ENCODE measurements at regions of chr12 and their contacts with region 1.

Region 1: GRCh38 chr12:54005853-54006686 is 2.7 kb upstream of the HOXC8 start:
- DNase-seq: peak; percentile 83
- ATAC-seq: peak; percentile 89
- H3K4me3 Mint-ChIP-seq: peak overlapping the region; percentile 78
- H3K27ac Mint-ChIP-seq: no peak overlapping the region
- H3K4me1 Mint-ChIP-seq: peaks cover 23% of the 10 kb centered on the region
- H3K27me3 Mint-ChIP-seq: peaks cover 77% of the 10 kb centered on the region
- CTCF ChIP-seq: peak; percentile 67

Region 2: GRCh38 chr12:53928054-53928835 is 77.8 kb before region 1 on chr12:
- CTCF ChIA-PET with region 1: no interaction called
- POLR2A ChIA-PET with region 1: no interaction called
- intact Hi-C with region 1: no loop called
- DNase-seq: no peak
- ATAC-seq: no peak
- H3K4me3 Mint-ChIP-seq: no peak overlapping the region
- H3K27ac Mint-ChIP-seq: no peak overlapping the region
- H3K4me1 Mint-ChIP-seq: peaks cover 7% of the 10 kb centered on the region
- H3K27me3 Mint-ChIP-seq: peaks cover 83% of the 10 kb centered on the region
- CTCF ChIP-seq: no peak

Region 3: DNA sequence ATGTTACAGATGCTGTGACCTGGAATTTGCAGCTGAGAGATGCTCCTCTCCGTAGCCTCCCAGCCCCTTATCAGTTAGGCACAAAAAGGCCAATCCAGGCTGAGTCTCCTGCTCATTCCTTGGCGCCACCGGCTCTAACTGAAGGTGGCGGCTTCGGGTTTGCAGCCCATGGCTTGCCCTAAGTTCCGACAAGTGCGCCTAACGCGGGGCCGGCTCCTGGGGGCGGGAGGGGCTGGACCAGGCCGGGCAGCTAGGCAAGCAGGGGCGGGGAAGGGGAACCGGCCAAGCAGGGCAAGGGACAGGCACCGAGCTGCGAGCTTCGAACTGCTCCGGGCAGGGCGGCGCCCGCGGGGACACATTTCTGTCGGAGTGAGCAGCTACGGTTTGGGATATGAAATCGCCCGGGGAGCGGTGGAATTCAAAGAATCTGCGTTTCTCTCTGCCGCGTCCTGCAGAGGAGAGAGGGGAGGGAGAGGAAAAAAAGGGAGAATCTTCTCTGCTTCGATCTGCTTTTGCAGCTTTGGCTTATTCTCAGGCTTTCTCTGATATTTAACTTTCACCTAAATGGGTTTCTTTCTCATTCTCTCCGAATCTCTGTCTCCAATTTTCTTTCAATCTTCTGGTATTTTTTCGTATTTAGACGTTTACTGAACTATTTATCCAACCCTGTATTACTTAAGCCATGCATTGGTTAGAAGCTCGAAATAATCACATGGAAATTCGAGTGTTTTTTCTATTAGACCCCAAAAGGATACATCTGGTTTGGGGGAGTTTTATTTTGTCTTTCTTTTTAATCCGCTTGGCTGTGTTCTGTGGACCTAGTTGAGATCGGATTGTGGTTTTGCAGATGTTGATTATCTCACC is 53.0 kb before region 1 on chr12:
- CTCF ChIA-PET with region 1: no interaction called
- POLR2A ChIA-PET with region 1: no interaction called
- intact Hi-C with region 1: no loop called
- DNase-seq: no peak
- ATAC-seq: no peak
- H3K4me3 Mint-ChIP-seq: no peak overlapping the region
- H3K27ac Mint-ChIP-seq: no peak overlapping the region
- H3K4me1 Mint-ChIP-seq: peaks cover 13% of the 10 kb centered on the region
- H3K27me3 Mint-ChIP-seq: peaks cover 71% of the 10 kb centered on the region
- CTCF ChIP-seq: no peak

Region 4: DNA sequence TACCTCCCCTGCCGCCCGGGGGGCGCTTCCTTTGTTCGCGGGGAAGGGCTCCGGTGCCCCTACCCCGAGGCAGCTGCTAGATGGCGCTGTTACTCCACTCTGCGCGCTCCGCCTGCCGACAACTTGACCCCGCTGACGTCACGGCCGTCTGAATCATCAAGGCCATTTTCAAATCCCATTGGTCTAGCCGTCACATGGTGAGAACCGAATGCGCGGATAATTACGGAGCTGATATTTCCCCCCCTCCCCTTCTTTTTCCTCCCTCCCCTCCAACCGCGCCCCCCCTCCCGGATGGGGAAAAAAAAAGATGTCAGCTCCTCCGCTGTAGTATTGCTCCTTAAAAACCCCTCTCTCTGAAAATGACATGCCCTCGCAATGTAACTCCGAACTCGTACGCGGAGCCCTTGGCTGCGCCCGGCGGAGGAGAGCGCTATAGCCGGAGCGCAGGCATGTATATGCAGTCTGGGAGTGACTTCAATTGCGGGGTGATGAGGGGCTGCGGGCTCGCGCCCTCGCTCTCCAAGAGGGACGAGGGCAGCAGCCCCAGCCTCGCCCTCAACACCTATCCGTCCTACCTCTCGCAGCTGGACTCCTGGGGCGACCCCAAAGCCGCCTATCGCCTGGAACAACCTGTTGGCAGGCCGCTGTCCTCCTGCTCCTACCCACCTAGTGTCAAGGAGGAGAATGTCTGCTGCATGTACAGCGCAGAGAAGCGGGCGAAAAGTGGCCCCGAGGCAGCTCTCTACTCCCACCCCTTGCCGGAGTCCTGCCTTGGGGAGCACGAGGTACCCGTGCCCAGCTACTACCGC is 21.0 kb before region 1 on chr12 and contains the start of gene HOXC10:
- CTCF ChIA-PET with region 1: interaction called, 13 read pairs
- POLR2A ChIA-PET with region 1: no interaction called
- intact Hi-C with region 1: no loop called
- DNase-seq: no peak
- ATAC-seq: peak; percentile 37
- H3K4me3 Mint-ChIP-seq: peak within 1 kb of the TSS; percentile 15
- H3K27ac Mint-ChIP-seq: peak within 1 kb of the TSS; percentile 56
- H3K4me1 Mint-ChIP-seq: peaks cover 28% of the 10 kb centered on the region
- H3K27me3 Mint-ChIP-seq: peaks cover 88% of the 10 kb centered on the region
- CTCF ChIP-seq: no peak
- total RNA-seq, gene HOXC10: not detected in 2 replicates

Region 5: DNA sequence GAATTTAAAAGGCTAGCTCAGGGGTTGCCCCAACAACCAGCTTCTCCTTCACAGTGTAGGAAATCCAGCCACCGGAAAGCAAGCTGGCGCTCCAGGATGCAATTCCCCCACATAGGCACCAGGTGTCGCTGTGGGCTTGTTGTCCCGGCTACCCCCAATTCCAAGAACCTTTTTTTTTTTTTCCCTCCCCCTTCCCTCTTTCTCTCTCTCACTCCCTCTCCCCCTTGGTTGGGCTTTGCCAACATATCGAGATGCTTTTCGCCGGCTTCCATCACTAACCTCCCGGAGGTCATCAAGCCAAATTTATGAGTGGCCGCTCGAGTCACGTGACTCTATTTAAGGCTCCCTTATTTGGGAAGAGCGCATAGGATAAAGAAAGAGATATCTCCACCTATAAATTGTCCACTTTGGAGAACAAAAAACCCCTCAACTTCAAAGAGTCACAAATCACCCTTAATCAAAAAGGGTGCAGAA is 26.6 kb after region 1 on chr12 and contains the start of gene HOXC5:
- CTCF ChIA-PET with region 1: interaction called, 9 read pairs
- POLR2A ChIA-PET with region 1: no interaction called
- intact Hi-C with region 1: loop called (anchors 2 kb)
- DNase-seq: peak; percentile 51
- ATAC-seq: peak; percentile 63
- H3K4me3 Mint-ChIP-seq: peak within 1 kb of the TSS; percentile 70
- H3K27ac Mint-ChIP-seq: peak within 1 kb of the TSS; percentile 24
- H3K4me1 Mint-ChIP-seq: peaks cover 30% of the 10 kb centered on the region
- H3K27me3 Mint-ChIP-seq: peaks cover 57% of the 10 kb centered on the region
- CTCF ChIP-seq: peak; percentile 66
- total RNA-seq, gene HOXC5: not detected in 2 replicates

Region 6: DNA sequence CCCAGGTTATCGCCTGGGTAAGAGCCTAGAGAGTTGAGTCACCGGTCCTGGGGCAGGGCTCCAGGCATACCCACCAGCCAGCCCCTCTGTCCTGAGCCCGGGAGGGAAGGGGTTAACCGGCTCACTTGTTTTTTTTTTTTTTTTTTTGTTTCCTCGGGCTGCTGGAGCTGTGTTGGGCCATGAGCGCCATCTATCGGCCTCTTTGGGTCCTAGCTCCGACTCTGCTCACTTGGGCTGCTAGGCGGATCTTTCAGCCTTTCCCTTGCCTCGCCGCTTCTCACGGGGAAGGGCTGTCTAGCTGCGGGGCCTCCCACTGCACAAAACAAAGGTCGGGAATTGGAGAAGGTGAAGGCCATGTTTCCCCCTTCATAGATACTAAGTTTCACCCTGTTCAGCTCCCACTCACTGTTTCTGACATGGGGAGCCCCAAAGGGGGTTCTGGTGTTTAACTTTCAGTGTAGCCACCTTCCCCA is 185.5 kb after region 1 on chr12:
- CTCF ChIA-PET with region 1: interaction called, 78 read pairs
- POLR2A ChIA-PET with region 1: interaction called, 3 read pairs
- intact Hi-C with region 1: loop called (anchors 1 kb)
- DNase-seq: peak; percentile 58
- ATAC-seq: peak; percentile 61
- H3K4me3 Mint-ChIP-seq: no peak overlapping the region
- H3K27ac Mint-ChIP-seq: no peak overlapping the region
- H3K4me1 Mint-ChIP-seq: peaks cover 29% of the 10 kb centered on the region
- H3K27me3 Mint-ChIP-seq: peaks cover 20% of the 10 kb centered on the region
- CTCF ChIP-seq: no peak

Region 7: DNA sequence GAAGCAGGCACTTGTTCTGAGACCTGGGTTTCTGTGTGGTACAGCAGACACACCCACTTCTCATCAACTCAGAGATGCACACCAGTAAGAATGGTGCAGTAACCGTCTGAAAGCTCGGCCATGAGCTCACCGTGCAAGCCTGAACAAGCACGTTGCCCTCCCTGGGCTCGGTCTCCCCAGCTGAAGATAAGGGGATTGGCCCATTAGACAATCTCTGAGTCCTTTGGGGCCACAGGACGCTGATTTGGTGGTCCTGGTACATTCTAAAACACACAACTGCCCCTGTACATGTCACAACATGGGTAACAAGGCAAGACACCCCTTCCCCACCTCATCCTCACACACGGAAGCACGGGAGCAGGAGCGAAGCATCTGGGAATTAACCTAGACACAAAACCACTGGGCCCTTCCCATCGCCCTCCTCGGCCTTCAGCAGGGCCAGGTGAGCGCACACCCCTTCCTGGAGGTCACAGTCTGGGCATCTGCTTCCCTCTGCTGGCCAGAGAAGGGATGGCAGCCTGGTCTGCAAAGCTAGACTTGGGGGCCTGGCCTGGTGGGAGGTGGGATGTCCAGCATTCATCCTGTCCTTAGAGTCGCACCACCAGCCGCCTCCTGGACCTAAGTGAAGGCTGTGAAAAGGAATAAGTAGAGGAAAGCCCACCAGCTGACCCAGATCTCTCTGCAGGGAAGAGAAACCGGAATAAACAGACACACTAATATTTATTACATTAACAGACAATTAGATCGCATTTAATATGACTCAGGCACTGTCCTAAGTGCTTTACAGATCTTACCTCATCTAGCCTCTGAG is 201.6 kb after region 1 on chr12:
- CTCF ChIA-PET with region 1: interaction called, 66 read pairs
- POLR2A ChIA-PET with region 1: interaction called, 7 read pairs
- intact Hi-C with region 1: loop called (anchors 1 kb)
- DNase-seq: peak; percentile 79
- ATAC-seq: peak; percentile 100
- H3K4me3 Mint-ChIP-seq: no peak overlapping the region
- H3K27ac Mint-ChIP-seq: peak overlapping the region; percentile 30
- H3K4me1 Mint-ChIP-seq: peaks cover 4% of the 10 kb centered on the region
- H3K27me3 Mint-ChIP-seq: peaks cover 35% of the 10 kb centered on the region
- CTCF ChIP-seq: no peak

Region 8: GRCh38 chr12:54368709-54369583 is 362.9 kb after region 1 on chr12:
- CTCF ChIA-PET with region 1: no interaction called
- POLR2A ChIA-PET with region 1: no interaction called
- intact Hi-C with region 1: loop called (anchors 5 kb)
- DNase-seq: peak; percentile 78
- ATAC-seq: peak; percentile 95
- H3K4me3 Mint-ChIP-seq: peak overlapping the region; percentile 55
- H3K27ac Mint-ChIP-seq: no peak overlapping the region
- H3K4me1 Mint-ChIP-seq: peaks cover 22% of the 10 kb centered on the region
- H3K27me3 Mint-ChIP-seq: no peaks in the 10 kb centered on the region
- CTCF ChIP-seq: peak; percentile 60